ENCODE measurements at regions of chr19 and their contacts with region 1.

Region 1: DNA sequence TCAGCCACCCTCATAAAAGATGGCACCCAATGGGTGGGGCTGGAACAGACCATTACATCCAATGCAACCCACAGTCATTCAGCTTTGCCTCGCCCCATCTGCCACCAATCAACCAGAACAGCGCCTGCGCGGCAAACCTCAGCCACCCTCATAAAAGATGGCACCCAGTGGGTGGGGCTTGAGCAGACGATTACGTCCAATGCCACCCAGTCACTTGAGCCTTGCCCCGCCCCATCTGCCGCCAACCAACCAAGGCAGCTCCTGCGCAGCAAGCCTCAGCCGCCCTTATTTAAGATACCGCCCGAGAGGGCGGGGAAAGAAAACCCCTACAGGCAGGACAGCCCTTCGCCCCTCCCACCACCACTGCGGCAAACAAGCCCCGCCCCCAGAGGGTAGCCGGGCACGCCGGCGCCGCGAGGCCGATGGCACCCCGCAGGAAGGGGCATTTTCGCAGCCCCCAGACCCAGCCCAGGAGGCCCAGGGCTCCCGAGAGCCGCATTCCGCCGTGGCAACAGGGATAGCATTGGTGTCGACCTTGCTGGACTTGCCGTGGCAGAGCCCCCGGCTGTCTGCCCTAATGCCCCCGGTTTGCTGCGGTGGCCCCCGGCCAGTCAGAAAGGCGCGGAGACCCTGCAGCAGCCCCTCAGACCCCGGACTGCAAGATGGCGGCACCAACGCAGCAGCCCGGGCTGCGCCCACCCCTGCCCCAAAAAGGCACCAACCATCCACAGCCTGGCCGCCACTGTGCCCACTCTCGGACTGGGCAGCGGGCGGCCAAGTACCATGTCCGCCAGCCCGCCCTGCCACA is 670 bp downstream of the PEG3 start:
- DNase-seq: peak; percentile 78
- H3K4me3 ChIP-seq: peak overlapping the region; percentile 4 to 44 (median 32)
- H3K27ac ChIP-seq: peak overlapping the region; percentile 57 to 91 (median 67)
- H3K4me1 ChIP-seq: no peaks in the 10 kb centered on the region
- H3K27me3 ChIP-seq: no peaks in the 10 kb centered on the region
- CTCF ChIP-seq: no peak
- EP300 ChIP-seq: no peak
- POLR2A ChIP-seq: no peak

Region 2: GRCh38 chr19:56678205-56678604 is 161.7 kb before region 1 on chr19:
- in situ Hi-C with region 1: no loop called
- intact Hi-C with region 1: no loop called
- DNase-seq: no peak
- H3K4me3 ChIP-seq: no peak overlapping the region
- H3K27ac ChIP-seq: no peak overlapping the region
- H3K4me1 ChIP-seq: no peaks in the 10 kb centered on the region
- H3K27me3 ChIP-seq: no peaks in the 10 kb centered on the region
- CTCF ChIP-seq: no peak
- EP300 ChIP-seq: no peak
- POLR2A ChIP-seq: no peak

Region 3: GRCh38 chr19:56868446-56868845 is 28.6 kb after region 1 on chr19:
- in situ Hi-C with region 1: no loop called
- intact Hi-C with region 1: loop called (anchors 1 kb)
- DNase-seq: no peak
- H3K4me3 ChIP-seq: no peak overlapping the region
- H3K27ac ChIP-seq: no peak overlapping the region
- H3K4me1 ChIP-seq: no peaks in the 10 kb centered on the region
- H3K27me3 ChIP-seq: no peaks in the 10 kb centered on the region
- CTCF ChIP-seq: no peak
- EP300 ChIP-seq: no peak
- POLR2A ChIP-seq: no peak

Measured in transverse colon (tissue), 4 donors.